ENCODE measurements at regions of chr7 and their contacts with region 1.

Region 1: DNA sequence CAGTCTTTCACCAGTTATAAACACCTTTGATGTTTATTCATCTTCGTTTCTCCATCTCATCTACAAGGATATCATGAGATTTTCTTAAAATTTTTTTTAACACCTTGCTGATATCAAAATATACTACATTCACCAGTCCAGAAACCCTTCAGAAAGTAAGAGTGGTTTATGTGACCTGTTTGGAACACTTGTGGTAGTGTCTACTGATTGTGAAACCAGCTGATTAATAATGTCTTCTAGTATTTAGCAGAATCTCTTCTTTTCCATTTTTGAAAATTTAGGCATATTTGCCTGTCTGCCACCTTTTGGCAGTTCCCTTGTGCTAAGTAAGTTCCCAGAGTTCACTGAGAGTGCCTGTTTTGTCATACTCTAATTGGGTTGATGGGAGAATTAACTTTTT is 18.5 kb downstream of the DLD start:
- DNase-seq: no peak
- ATAC-seq: no peak
- H3K4me3 Mint-ChIP-seq: no peak overlapping the region
- H3K27ac Mint-ChIP-seq: no peak overlapping the region
- H3K4me1 Mint-ChIP-seq: peaks cover 6% of the 10 kb centered on the region
- H3K27me3 Mint-ChIP-seq: no peaks in the 10 kb centered on the region
- CTCF ChIP-seq: no peak

Region 2: GRCh38 chr7:107168233-107169119 is 741.0 kb before region 1 on chr7 and contains the start of gene HBP1:
- CTCF ChIA-PET with region 1: no interaction called
- POLR2A ChIA-PET with region 1: no interaction called
- intact Hi-C with region 1: no loop called
- DNase-seq: peak; percentile 84
- ATAC-seq: peak; percentile 80
- H3K4me3 Mint-ChIP-seq: peak within 1 kb of the TSS; percentile 99
- H3K27ac Mint-ChIP-seq: peak within 1 kb of the TSS; percentile 99
- H3K4me1 Mint-ChIP-seq: peaks cover 45% of the 10 kb centered on the region
- H3K27me3 Mint-ChIP-seq: peaks cover 6% of the 10 kb centered on the region
- CTCF ChIP-seq: no peak
- total RNA-seq, gene HBP1: 53.6 and 59.9 TPM in 2 replicates

Region 3: DNA sequence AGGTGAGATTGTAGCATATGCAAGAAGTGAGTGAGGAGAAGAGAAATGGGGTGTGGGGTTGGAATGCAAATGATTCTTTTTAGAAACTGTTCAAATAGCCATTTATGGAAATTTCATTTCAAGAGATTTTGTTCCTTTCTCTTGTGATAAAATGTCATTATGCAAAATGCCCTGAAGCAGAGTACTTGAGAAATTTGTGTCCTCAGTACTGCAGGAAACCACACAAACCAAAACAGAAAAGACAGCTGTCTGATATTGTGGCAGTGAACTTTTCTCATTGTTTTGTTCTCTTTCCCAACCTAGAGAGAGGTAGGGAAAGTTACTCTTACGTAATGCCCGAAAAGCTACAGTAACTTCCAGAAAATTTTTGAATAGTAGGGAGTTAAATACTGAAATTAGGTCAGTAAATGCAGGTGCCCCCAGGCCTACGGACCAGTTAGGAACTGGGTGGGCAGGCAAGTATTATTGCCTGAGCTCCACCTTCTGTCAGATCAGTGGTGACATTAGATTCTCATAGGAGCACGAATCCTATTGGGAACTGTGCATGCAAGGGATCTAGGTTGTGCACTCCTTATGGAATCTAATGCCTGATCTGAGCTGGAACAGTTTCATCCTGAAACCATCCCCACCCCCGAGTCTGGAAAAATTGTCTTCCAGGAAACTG is 15.5 kb after region 1 on chr7:
- CTCF ChIA-PET with region 1: no interaction called
- POLR2A ChIA-PET with region 1: no interaction called
- intact Hi-C with region 1: loop called (anchors 1 kb)
- DNase-seq: no peak
- ATAC-seq: no peak
- H3K4me3 Mint-ChIP-seq: no peak overlapping the region
- H3K27ac Mint-ChIP-seq: no peak overlapping the region
- H3K4me1 Mint-ChIP-seq: peaks cover 16% of the 10 kb centered on the region
- H3K27me3 Mint-ChIP-seq: no peaks in the 10 kb centered on the region
- CTCF ChIP-seq: no peak

Region 4: DNA sequence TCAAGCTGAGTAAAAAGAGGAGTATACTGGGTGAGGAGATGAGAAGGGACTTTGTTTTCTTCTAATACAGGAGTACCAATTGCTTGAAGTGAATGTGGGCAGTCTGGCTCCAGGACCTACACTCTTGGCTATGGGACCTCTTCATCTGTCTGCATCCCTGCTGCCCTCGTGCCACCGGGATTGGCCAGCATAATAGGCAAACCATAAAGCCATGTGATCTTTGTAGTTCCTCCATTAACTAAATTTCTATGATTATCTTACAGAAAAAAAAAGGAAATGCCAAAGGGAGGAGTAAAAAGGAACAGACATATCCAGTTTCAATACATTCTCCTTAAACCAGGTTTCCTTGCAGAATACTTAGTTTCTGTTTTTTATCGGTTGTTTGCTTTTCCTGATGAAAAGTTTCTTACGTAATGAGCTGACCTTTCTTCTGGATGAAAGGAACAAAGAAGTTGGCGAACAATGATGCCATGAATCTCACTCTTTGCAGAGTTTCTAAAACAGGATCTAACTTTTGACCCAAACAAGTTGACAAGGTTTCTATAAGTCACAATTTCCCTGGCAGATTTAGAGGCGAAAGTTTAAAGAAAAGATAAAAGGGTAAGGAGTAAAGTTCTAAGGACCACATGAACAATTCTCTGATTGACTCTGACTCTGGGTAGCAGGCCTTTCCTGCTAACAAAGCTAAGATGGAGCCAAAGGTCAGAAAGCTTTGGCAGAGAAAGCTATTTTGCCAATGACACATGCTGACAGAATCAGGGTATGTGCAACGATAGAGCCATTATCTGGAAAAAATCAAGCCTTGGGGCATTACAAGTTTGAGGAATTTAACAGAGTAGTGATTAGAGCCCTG is 39.4 kb after region 1 on chr7:
- CTCF ChIA-PET with region 1: no interaction called
- POLR2A ChIA-PET with region 1: no interaction called
- intact Hi-C with region 1: no loop called
- DNase-seq: no peak
- ATAC-seq: no peak
- H3K4me3 Mint-ChIP-seq: no peak overlapping the region
- H3K27ac Mint-ChIP-seq: no peak overlapping the region
- H3K4me1 Mint-ChIP-seq: no peaks in the 10 kb centered on the region
- H3K27me3 Mint-ChIP-seq: peaks cover 2% of the 10 kb centered on the region
- CTCF ChIP-seq: no peak

Region 5: GRCh38 chr7:107982918-107983389 is 73.5 kb after region 1 on chr7:
- CTCF ChIA-PET with region 1: no interaction called
- POLR2A ChIA-PET with region 1: no interaction called
- intact Hi-C with region 1: no loop called
- DNase-seq: no peak
- ATAC-seq: no peak
- H3K4me3 Mint-ChIP-seq: no peak overlapping the region
- H3K27ac Mint-ChIP-seq: no peak overlapping the region
- H3K4me1 Mint-ChIP-seq: no peaks in the 10 kb centered on the region
- H3K27me3 Mint-ChIP-seq: peaks cover 7% of the 10 kb centered on the region
- CTCF ChIP-seq: no peak

Measured in activated B cell treated with CpG ODN at 0.5 μM for 24 hours (primary cell).